Common myeloid progenitor, CD34-positive (primary cell): ENCODE measurements at regions of chr3 and their contacts with region 1.

Region 1: DNA sequence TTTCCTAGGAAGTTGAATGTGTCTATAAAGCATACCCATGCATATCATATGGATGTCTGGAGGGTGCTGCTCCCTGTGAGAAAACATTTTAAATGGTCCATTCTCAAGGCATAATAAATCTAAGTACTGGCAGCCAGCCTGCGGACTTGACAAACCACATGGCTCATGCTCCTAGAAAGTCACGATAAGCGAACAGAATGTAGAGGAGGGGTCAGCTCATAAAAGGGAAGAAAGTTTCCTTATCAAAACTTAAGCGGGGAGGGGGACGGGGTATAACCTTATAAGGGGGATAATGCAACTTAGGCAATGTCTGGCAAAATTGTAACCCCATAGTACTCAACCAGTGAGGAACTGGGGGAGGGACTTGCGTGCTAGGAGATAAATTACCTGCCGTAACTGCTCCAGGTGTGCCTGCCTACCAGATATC is 159.8 kb upstream of the LMCD1 start:
- DNase-seq: peak; percentile 40 to 89 (median 75)
- H3K4me3 ChIP-seq: peak overlapping the region in 3 of 7 experiments; percentile 8 to 40 (median 20)
- H3K27ac ChIP-seq: peak overlapping the region in 1 of 2 experiments; percentile 44
- H3K4me1 ChIP-seq: peaks cover 4 to 19% (median 9%) of the 10 kb centered on the region in 4 experiments
- H3K27me3 ChIP-seq: peaks cover 0 to 1% (median 0%) of the 10 kb centered on the region in 5 experiments

Region 2: GRCh38 chr3:8290611-8291010 is 51.2 kb before region 1 on chr3:
- CTCF ChIA-PET with region 1: no interaction called
- POLR2A ChIA-PET with region 1: no interaction called
- DNase-seq: no peak
- H3K4me3 ChIP-seq: no peak overlapping the region
- H3K27ac ChIP-seq: no peak overlapping the region
- H3K4me1 ChIP-seq: no peaks in the 10 kb centered on the region
- H3K27me3 ChIP-seq: no peaks in the 10 kb centered on the region

Region 3: GRCh38 chr3:8357859-8358258 is 16.0 kb after region 1 on chr3:
- CTCF ChIA-PET with region 1: interaction called, 13 read pairs
- POLR2A ChIA-PET with region 1: no interaction called
- DNase-seq: no peak
- H3K4me3 ChIP-seq: peak overlapping the region in 2 of 7 experiments; percentile 38 to 48
- H3K27ac ChIP-seq: peak overlapping the region; percentile 46 to 81
- H3K4me1 ChIP-seq: peaks cover 15 to 39% (median 32%) of the 10 kb centered on the region in 4 experiments
- H3K27me3 ChIP-seq: no peaks in the 10 kb centered on the region

Region 4: DNA sequence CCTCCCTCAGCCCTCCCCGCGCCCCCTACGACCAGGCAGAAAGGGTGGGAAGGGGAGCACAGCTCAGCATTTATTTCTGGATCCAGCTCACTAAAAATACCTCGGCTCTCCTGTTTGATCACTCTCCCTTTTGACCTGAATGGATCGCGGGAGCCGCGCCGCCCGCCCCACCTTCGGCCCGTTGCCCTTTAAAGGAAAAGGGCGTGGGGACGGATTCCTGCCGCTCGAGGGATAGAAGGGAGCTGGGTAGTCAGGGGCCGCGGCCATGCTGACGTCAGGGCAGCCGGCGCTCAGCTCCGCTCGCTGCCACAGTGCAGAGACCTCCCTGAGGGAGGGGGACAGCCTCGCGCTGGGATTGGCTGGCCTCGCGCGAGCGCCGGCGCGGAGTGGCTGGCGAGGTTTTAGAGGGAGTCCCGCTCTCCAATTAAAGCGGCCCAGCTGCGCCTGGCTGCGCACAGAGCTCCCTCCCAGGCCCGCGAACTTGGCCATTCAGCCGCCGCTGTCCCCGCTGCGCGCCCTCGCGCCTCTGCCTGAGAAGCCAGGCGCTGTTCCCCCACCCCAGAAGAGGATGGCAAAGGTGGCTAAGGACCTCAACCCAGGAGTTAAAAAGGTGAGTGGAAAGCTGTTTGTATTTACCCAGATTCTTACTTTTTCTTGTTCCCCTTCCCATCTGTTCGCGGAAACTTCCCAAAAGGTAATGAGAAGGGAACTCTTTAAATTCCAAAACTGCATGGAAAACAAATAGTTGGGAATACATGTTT is 159.7 kb after region 1 on chr3 and contains the start of gene LMCD1:
- CTCF ChIA-PET with region 1: no interaction called
- POLR2A ChIA-PET with region 1: no interaction called
- DNase-seq: peak; percentile 88 to 92 (median 89)
- H3K4me3 ChIP-seq: peak within 1 kb of the TSS; percentile 19 to 77 (median 59)
- H3K27ac ChIP-seq: peak within 1 kb of the TSS in 1 of 2 experiments; percentile 36
- H3K4me1 ChIP-seq: peaks cover 2 to 18% (median 11%) of the 10 kb centered on the region in 4 experiments
- H3K27me3 ChIP-seq: no peaks in the 10 kb centered on the region